ENCODE measurements at regions of chr9 and their contacts with region 1.

Region 1: GRCh38 chr9:111161015-111161415 is 122.7 kb upstream of the LPAR1 start:
- DNase-seq: no peak
- ATAC-seq: peak in 1 of 4 donors; percentile 36
- H3K4me3 ChIP-seq: no peak overlapping the region
- H3K27ac ChIP-seq: no peak overlapping the region
- H3K4me1 ChIP-seq: no peaks in the 10 kb centered on the region
- H3K27me3 ChIP-seq: no peaks in the 10 kb centered on the region
- CTCF ChIP-seq: no peak

Region 2: DNA sequence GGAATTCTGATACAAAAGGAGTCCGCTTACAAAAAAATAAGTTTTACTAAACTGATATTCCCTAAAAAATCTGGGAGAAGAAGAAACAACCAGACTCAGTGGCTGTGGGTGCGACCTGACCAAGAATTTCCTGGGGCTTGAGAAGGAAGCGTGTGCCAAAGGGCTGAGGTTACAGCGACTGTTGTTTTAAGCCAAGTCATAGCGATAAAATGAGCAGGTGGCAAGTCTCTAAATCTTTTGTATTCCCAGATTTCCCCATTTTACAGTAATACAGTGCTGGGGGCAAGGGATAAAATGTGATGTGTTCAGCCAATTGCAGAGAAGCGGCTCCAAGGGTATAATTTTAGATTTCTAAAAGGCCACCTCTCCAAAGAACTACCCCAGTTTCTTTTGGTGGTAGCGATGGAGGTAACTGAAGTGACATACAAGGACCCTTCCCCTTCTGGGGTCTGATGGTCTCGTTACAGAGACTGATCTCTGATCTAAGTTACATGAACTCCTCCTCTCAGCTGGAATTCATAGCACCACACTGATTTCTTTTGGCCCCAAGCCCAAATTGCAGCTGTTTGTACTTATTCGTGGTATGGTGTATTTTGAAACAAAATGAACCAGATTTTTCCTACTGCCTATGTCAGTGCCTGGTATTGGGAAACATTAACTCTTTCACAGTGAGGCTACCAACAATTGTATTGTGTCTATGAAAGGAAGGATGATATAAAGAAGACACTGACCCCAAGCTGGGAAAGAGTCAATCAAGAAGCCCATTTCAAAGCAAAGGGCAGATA is 164.4 kb before region 1 on chr9:
- intact Hi-C with region 1: no loop called
- DNase-seq: no peak
- ATAC-seq: peak in 1 of 4 donors; percentile 30
- H3K4me3 ChIP-seq: no peak overlapping the region
- H3K27ac ChIP-seq: no peak overlapping the region
- H3K4me1 ChIP-seq: no peaks in the 10 kb centered on the region
- H3K27me3 ChIP-seq: no peaks in the 10 kb centered on the region
- CTCF ChIP-seq: no peak

Region 3: DNA sequence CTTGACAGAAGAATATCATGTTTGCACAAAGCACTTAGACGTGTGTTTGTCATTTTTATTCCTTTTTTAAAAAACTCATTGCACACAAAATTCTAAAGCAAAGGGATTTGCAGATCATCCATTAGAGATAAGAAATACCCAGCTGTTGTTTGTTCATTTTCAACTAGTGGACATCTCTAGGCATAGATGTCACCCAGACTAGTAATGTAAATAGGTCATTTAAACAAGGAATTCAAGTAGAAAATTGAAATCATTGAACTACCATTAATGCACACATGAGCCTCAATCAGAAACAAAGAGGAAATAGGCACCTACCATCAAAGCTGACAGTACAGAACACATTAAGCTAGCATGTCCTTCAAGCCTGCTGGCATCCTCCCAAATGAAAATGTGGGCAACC is 61.7 kb after region 1 on chr9:
- intact Hi-C with region 1: loop called in 1 of 3 experiments (anchors 10 kb)
- DNase-seq: no peak
- ATAC-seq: peak in 2 of 4 donors; percentile 52 to 58
- H3K4me3 ChIP-seq: no peak overlapping the region
- H3K27ac ChIP-seq: no peak overlapping the region
- H3K4me1 ChIP-seq: no peaks in the 10 kb centered on the region
- H3K27me3 ChIP-seq: no peaks in the 10 kb centered on the region
- CTCF ChIP-seq: no peak

Region 4: GRCh38 chr9:111271481-111272080 is 110.6 kb after region 1 on chr9:
- intact Hi-C with region 1: no loop called
- DNase-seq: no peak
- ATAC-seq: no peak
- H3K4me3 ChIP-seq: no peak overlapping the region
- H3K27ac ChIP-seq: no peak overlapping the region
- H3K4me1 ChIP-seq: no peaks in the 10 kb centered on the region
- H3K27me3 ChIP-seq: no peaks in the 10 kb centered on the region
- CTCF ChIP-seq: no peak

Region 5: DNA sequence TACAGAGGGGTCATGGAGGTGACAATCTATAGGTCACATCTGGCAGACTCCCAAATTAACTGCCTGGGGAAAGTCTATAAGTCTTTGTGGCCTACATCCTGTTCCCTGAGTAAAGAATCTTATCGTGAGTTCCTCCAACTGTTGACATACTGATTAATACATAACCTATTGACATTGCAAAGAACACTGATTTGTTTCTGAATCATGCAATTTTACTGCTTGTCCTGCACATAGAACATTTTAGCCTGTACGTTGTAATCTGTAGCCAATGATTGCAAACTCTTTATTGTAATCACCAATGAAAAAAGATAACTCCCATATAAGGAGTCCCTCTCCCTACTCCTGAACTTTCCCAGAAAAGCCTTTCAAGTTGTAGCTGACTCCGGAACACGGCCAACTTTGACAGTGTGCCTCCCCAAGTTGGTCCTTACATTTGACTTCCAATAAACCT is 187.8 kb after region 1 on chr9:
- intact Hi-C with region 1: no loop called
- DNase-seq: no peak
- ATAC-seq: peak; percentile 90 to 94 (median 92)
- H3K4me3 ChIP-seq: no peak overlapping the region
- H3K27ac ChIP-seq: peak overlapping the region in 1 of 4 donors; percentile 18
- H3K4me1 ChIP-seq: peaks cover 7 to 15% (median 8%) of the 10 kb centered on the region in 3 donors
- H3K27me3 ChIP-seq: peaks cover 0 to 31% (median 2%) of the 10 kb centered on the region in 4 donors
- CTCF ChIP-seq: no peak

Measured in pancreas (tissue), 10 donors.